ENCODE measurements at regions of chr17 and their contacts with region 1.

Region 1: GRCh38 chr17:21318439-21318838 is 33.9 kb downstream of the MAP2K3 start:
- DNase-seq: no peak
- ATAC-seq: no peak
- H3K4me3 ChIP-seq: no peak overlapping the region
- H3K4me3 Mint-ChIP-seq: no peak overlapping the region
- H3K27ac ChIP-seq: no peak overlapping the region
- H3K27ac Mint-ChIP-seq: no peak overlapping the region
- H3K4me1 ChIP-seq: no peaks in the 10 kb centered on the region
- H3K4me1 Mint-ChIP-seq: peaks cover 0 to 7% (median 6%) of the 10 kb centered on the region in 7 donors
- H3K27me3 ChIP-seq: no peaks in the 10 kb centered on the region
- H3K27me3 Mint-ChIP-seq: peaks cover 0 to 5% (median 5%) of the 10 kb centered on the region in 5 donors

Region 2: GRCh38 chr17:21551081-21551881 is 232.8 kb after region 1 on chr17:
- CTCF ChIA-PET with region 1: no interaction called
- POLR2A ChIA-PET with region 1: no interaction called
- intact Hi-C with region 1: loop called in 1 of 2 experiments (anchors 1 kb)
- DNase-seq: peak; percentile 68 to 89 (median 80)
- ATAC-seq: peak; percentile 96
- H3K4me3 ChIP-seq: peak overlapping the region; percentile 69
- H3K4me3 Mint-ChIP-seq: peak overlapping the region; percentile 78 to 91 (median 88)
- H3K27ac ChIP-seq: peak overlapping the region; percentile 69
- H3K27ac Mint-ChIP-seq: peak overlapping the region in 6 of 9 donors; percentile 16 to 66 (median 46)
- H3K4me1 ChIP-seq: peaks cover 0 to 10% of the 10 kb centered on the region in 2 donors
- H3K4me1 Mint-ChIP-seq: peaks cover 24 to 53% (median 41%) of the 10 kb centered on the region in 7 donors
- H3K27me3 ChIP-seq: no peaks in the 10 kb centered on the region
- H3K27me3 Mint-ChIP-seq: peaks cover 17 to 31% (median 27%) of the 10 kb centered on the region in 5 donors